ENCODE measurements at regions of chr2 and their contacts with region 1.

Region 1: GRCh38 chr2:212686285-212686895 is 147.8 kb upstream of the ERBB4 start:
- DNase-seq: peak; percentile 49 to 76
- ATAC-seq: peak; percentile 71 to 85 (median 76)
- H3K4me3 ChIP-seq: no peak overlapping the region
- H3K4me3 Mint-ChIP-seq: no peak overlapping the region
- H3K27ac ChIP-seq: no peak overlapping the region
- H3K27ac Mint-ChIP-seq: no peak overlapping the region
- H3K4me1 ChIP-seq: no peaks in the 10 kb centered on the region
- H3K4me1 Mint-ChIP-seq: no peaks in the 10 kb centered on the region
- H3K27me3 ChIP-seq: no peaks in the 10 kb centered on the region
- H3K27me3 Mint-ChIP-seq: peaks cover under 1 to 3% of the 10 kb centered on the region in 2 donors
- CTCF ChIP-seq: peak; percentile 92

Region 2: DNA sequence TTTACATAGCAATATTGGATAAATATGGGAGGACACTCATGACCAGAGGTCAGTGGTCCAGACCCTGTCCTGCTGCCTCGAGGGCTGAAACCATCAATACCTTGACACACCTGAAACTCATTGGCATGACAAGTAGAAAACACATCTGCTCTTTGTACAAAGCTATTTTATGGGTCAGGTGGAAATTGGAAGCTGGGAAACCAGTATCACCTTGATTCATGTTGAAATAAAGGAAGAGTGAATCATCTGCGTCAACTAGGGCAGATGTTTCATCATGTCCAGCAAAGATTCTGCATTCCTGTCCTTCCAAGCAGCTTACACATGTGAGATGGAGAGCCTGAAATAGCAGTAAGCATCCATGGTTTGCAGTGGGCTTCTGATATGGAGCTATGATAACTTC is 67.7 kb before region 1 on chr2:
- intact Hi-C with region 1: no loop called
- DNase-seq: no peak
- ATAC-seq: no peak
- H3K4me3 ChIP-seq: no peak overlapping the region
- H3K4me3 Mint-ChIP-seq: no peak overlapping the region
- H3K27ac ChIP-seq: no peak overlapping the region
- H3K27ac Mint-ChIP-seq: no peak overlapping the region
- H3K4me1 ChIP-seq: no peaks in the 10 kb centered on the region
- H3K4me1 Mint-ChIP-seq: no peaks in the 10 kb centered on the region
- H3K27me3 ChIP-seq: no peaks in the 10 kb centered on the region
- H3K27me3 Mint-ChIP-seq: peaks cover 7 to 34% of the 10 kb centered on the region in 2 donors
- CTCF ChIP-seq: no peak

Region 3: GRCh38 chr2:212892193-212892592 is 205.8 kb after region 1 on chr2:
- intact Hi-C with region 1: loop called (anchors 1 kb)
- DNase-seq: peak in 1 of 2 donors; percentile 23
- ATAC-seq: peak; percentile 35 to 72 (median 70)
- H3K4me3 ChIP-seq: no peak overlapping the region
- H3K4me3 Mint-ChIP-seq: peak overlapping the region; percentile 26
- H3K27ac ChIP-seq: no peak overlapping the region
- H3K27ac Mint-ChIP-seq: peak overlapping the region in 1 of 2 donors; percentile 27
- H3K4me1 ChIP-seq: no peaks in the 10 kb centered on the region
- H3K4me1 Mint-ChIP-seq: peaks cover 11 to 17% of the 10 kb centered on the region in 2 donors
- H3K27me3 ChIP-seq: no peaks in the 10 kb centered on the region
- H3K27me3 Mint-ChIP-seq: no peaks in the 10 kb centered on the region
- CTCF ChIP-seq: peak; percentile 44